Left ventricle myocardium inferior (tissue), 1 donor: ENCODE measurements at regions of chr12 and their contacts with region 1.

Region 1: GRCh38 chr12:66092559-66093269 is 37.8 kb downstream of the LLPH start:
- DNase-seq: no peak
- H3K4me3 ChIP-seq: no peak overlapping the region
- H3K27ac ChIP-seq: no peak overlapping the region
- H3K4me1 ChIP-seq: no peaks in the 10 kb centered on the region
- H3K27me3 ChIP-seq: no peaks in the 10 kb centered on the region
- CTCF ChIP-seq: no peak

Region 2: GRCh38 chr12:65565601-65566560 is 526.8 kb before region 1 on chr12:
- intact Hi-C with region 1: loop called (anchors 10 kb)
- DNase-seq: no peak
- H3K4me3 ChIP-seq: no peak overlapping the region
- H3K27ac ChIP-seq: peak overlapping the region; percentile 30
- H3K4me1 ChIP-seq: peaks cover 32% of the 10 kb centered on the region
- H3K27me3 ChIP-seq: peaks cover 8% of the 10 kb centered on the region
- CTCF ChIP-seq: no peak